ENCODE measurements at regions of chr12 and their contacts with region 1.

Region 1: DNA sequence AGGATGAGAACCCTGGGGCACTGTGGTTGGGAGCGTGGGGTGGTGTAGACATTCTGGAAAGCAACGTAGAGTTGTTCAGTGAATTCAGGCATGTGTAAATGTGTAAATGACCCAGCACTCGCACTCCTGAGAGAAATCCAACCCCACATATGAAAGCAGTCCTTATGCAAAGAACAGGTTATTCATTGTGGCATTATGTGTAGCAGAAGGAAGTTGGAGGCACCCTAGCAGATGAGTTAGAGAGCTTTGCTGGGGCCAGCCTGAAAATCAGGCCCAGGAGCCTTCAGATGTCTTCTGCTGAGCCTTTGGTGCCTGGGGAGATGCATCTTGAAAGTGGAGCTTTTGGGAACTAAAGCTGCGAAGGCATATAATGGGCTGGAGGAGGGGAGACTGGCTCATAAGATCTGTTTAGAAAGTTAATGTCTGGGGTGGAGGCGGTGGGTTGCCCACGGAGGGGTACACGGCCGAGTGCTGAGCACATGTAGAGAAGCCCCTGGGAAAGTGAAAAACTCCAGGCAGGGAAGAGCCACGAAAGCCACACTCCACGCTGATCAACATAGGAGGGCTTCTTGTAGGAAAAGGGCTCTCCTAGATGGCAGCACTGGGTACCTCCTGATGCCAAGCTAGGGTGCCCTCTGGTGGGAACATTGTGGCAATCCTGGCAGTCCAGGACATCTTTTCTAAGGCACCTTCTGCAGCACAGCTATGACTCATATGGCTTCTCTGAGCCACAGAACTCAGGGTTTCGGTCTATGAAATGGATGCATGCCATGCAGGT is 6.0 kb upstream of the KRT83 start:
- DNase-seq: peak; percentile 55
- H3K4me3 ChIP-seq: no peak overlapping the region
- CTCF ChIP-seq: peak; percentile 98

Region 2: DNA sequence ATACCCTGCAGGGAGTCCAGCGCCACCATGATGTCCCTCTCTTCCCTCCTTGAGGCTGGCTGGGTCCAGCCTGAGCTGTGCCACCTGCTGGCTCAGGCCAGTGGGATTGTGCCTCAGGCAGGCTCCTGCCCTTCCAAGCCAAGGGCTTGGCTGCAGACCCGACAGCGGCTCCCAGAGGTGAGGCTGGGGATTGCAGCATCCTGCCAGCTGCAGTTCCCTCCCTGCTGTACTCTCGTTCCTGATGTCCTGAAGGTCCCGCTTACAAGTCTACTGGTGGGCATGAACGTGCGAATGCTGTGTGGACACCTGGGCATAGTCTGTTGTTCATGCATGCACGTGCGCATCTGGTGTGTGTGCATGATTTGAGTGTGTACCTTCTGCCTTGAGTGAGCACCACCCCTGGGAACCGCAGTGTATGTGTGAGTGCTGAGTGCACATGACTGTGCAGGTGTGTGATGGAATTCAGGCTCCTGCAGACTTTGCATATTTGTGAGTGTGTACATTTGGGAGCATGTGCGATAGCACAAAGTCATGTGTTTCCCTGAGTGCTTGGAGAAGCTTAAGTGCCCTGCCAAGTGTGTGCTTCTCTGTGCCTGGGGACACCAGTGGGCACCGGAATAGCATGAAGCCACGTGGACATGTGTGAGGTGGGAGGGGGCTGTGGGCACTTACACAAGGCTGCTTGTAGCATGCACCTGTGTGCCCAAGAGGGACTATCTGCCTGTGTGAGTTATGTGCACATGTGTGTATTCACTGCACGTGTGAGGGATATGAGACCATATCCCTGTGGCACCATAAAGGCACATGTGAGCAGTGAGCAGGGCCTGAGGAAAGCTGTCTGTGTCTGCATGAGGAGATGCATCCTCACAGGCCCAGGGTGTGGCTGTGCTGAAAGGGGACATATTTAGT is 113.5 kb before region 1 on chr12:
- CTCF ChIA-PET with region 1: interaction called, 57 read pairs
- POLR2A ChIA-PET with region 1: no interaction called
- DNase-seq: no peak
- H3K4me3 ChIP-seq: no peak overlapping the region
- CTCF ChIP-seq: peak; percentile 100

Region 3: DNA sequence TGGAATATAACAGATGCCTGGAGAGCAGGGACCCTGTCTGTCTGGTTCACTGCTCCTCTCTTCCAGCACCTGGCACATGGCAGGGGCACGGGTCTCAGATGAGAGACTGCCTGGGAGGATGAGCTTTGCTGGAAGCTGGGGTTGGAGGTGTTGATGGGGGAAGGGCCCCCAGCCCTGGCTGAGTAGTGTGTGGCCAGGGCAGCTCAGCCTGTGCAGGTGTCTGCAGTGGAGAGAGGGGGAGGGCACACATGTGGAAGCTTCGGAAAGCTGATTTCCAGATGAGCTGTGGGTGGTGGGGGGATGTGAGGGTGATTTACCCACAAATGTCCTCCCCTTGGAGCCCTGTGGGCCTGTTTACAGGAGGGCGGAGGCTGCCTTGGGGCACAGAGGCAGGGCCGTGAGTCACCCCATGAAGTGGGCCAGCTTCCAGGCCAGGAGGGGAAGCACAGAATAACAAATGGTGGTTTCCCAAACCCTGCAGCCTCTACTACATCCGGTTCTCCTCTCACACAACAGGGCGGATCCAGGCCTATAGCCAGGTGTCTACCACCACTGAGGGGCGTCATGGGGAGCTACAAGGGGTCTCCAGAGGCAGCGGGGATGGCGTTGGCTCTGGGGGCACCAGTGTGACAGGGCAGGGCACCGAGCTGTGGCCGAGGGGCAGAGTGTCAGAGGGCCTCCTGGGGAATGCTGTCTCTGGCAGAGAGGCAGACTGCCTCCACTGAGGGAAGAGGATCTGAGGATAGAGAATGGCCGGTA is 83.2 kb before region 1 on chr12:
- CTCF ChIA-PET with region 1: interaction called, 16 read pairs
- POLR2A ChIA-PET with region 1: no interaction called
- DNase-seq: peak; percentile 54
- H3K4me3 ChIP-seq: no peak overlapping the region
- CTCF ChIP-seq: no peak

Region 4: DNA sequence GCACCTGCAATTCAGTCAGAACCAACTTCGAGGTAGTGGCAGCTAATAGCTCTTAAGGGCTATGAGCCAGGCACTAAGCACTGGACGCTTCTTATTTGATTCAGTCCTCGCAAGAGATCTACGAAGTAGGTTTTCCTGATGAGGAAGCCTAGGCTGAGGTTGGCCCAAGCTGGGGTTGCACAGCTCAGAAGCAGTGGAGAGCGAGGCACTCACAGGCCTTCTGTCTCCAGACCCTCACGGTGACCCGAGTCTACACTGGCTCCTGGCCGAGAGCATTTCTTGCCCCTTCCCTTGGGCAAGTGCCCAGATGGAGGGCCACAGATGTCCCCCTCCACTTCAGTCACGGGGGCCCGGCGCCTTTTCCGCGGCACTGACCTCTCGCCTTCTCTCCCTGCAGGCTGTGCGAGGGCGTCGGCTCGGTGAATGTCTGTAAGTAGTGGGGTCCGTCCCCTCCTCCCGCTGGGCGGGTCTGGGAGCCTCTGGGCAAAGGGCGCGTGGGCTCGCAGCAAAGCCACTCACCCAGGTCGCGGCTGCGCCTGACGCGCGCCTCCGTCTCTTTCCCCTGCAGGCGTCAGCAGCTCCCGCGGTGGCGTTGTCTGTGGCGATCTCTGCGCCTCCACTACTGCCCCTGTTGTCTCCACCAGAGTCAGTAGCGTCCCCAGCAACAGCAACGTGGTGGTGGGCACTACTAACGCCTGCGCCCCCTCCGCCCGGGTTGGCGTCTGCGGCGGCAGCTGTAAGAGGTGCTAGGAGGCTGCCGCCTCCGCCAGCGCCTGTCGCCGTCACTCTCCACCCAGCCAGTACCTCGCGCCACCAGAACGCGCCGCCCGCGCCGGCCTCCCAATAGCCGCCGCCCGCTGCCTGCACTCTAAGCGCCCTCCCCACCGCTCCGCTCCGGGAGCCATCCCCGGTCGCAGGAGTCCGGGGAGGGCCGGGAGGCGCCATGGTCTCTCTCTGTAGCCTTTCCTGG is 19.1 kb before region 1 on chr12:
- CTCF ChIA-PET with region 1: interaction called, 182 read pairs
- POLR2A ChIA-PET with region 1: no interaction called
- DNase-seq: no peak
- H3K4me3 ChIP-seq: peak overlapping the region; percentile 53
- CTCF ChIP-seq: no peak

Region 5: DNA sequence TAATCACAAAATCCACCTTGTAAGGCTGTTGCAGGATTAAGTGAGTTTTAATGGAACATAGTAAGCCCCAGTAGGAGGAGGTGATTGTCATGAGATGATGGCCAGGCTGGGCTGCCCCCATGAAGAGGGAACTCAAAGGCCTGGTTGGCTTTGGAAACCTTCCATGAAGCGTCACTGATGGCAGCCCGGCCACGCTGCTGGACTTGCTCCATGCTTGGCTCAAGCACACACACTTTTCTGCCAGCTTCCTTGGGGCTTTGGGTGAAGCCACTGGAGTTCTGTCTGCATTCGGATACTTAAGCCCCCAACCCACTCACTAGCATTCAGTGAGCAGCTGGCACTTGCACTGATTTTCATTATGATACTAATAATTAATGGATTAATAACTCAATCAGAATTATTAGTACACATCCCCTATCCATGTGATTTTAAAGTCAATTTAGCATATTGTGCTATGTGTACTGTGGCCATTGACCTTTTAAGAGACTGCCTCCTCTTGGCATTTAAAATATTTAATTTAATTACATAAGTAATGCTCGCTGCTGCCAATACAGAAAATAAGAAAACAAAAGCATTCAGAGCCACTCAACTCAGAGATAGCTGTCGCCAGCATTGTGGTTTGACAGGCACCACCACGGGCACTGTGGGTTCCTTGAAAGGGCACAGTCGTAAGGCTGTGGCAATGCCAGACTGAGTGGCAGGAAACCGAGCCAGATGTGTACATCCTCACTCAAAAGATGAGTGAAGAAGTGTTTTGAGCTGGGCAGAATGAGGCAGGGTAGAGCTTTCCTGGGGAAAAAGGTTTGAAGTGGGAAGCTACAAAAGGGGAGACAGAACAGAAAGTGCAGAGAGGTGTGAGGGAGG is 24.2 kb after region 1 on chr12:
- CTCF ChIA-PET with region 1: interaction called, 20 read pairs
- POLR2A ChIA-PET with region 1: interaction called, 3 read pairs
- DNase-seq: no peak
- H3K4me3 ChIP-seq: no peak overlapping the region
- CTCF ChIP-seq: no peak

Region 6: DNA sequence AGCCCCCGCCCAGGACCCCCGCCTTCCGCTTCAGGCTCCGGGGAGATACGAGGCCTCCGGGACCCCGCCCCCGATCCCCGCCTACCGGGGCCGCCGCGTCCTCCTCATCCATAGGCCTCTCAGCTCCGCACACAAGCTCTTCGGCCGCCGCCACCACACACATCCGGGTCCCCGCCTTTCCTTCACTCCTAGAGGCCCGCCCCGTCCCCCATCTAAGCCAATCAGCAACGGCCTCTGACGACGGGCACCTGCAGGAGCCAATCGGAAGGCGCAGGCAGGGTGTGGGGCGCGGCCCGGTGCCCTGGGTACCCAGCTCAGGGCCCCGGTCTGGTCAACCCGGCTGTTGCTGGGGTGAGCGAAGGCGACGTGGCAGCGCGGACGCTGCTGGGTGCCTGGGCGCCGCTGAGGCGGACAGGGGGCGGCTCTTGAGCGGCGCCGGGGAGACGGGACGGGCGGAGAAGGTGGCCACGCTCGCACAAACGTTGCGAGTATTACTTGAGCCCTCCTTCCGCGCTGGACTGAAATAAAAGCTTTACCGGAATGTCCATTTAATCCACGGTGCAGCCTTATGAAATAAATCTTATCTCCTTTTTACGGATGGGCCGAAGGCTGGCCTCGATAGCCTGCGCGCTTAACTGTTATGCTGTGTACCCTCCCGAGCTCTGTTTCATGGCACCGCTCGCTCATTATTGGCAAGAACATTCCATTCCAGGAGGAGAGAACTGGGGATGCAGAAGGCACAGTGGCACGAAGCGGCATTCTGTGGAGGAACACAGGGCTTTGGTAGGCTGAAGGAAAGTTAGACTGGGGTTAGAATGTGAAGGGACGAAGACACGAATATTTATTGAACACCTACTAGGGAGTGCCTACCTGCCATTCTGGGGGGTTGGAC is 752.2 kb after region 1 on chr12 and contains the start of gene SPRYD3:
- CTCF ChIA-PET with region 1: no interaction called
- POLR2A ChIA-PET with region 1: no interaction called
- DNase-seq: peak; percentile 80
- H3K4me3 ChIP-seq: peak within 1 kb of the TSS; percentile 76
- CTCF ChIP-seq: no peak

Measured in AG04449 (cell line).